Activated T-helper 2 cell treated with anti-CD3 and anti-CD28 coated beads, Interferon-gamma antibody, Interleukin-2, Interleukin-4, amounts not matched to agents 10 μg/mL and 5 μg/mL and 100 μg/mL, durations not matched to agents 14 hours and 24 hours and 36 hours (primary cell): ENCODE measurements at regions of chr10 and their contacts with region 1.

Region 1: DNA sequence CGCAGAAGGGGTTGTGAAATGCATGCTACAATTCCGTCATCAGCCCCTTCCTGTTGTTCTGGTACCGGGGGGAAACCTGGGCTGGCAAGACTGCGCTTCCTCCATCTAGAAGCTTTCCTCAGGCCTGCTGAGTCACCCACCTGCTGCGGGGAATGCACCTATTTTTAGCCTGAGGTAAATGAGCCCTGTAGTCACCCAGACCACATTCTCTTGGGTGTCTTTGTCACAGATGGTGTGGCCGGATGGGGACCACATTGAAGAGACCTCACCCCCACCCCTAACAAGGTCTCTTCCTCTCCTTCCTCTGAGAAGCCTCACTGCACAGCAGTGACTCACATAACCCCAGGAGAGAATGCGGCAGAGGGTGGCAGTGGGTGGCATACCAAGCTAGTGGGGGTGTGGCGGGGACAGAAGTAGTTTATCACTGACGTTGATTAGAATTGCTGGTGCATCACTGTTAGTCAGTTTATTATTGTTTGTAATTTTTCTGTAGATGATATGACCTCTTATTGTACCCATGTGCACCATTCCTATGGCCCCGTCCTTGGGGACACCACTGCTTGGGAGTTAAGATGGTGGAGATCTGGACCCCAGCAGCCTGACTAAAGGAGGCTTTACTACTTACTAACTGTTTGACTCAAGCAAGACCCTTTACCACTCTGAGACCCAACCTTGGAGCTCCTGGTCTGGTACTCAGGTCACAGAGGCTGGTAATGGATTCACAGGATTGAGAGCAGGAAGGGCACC is 83.0 kb upstream of the DUSP5 start:
- DNase-seq: peak; percentile 84
- H3K4me3 Mint-ChIP-seq: peak overlapping the region; percentile 61
- H3K27ac Mint-ChIP-seq: peak overlapping the region; percentile 90
- H3K4me1 Mint-ChIP-seq: peaks cover 70% of the 10 kb centered on the region
- H3K27me3 Mint-ChIP-seq: no peaks in the 10 kb centered on the region

Region 2: GRCh38 chr10:110311357-110311949 is 103.3 kb before region 1 on chr10:
- intact Hi-C with region 1: loop called (anchors 1 kb)
- DNase-seq: no peak
- H3K4me3 Mint-ChIP-seq: no peak overlapping the region
- H3K27ac Mint-ChIP-seq: no peak overlapping the region
- H3K4me1 Mint-ChIP-seq: peaks cover 33% of the 10 kb centered on the region
- H3K27me3 Mint-ChIP-seq: no peaks in the 10 kb centered on the region

Region 3: GRCh38 chr10:110395725-110396651 is 18.7 kb before region 1 on chr10:
- intact Hi-C with region 1: loop called (anchors 1 kb)
- DNase-seq: no peak
- H3K4me3 Mint-ChIP-seq: no peak overlapping the region
- H3K27ac Mint-ChIP-seq: peak overlapping the region; percentile 78
- H3K4me1 Mint-ChIP-seq: peaks cover 56% of the 10 kb centered on the region
- H3K27me3 Mint-ChIP-seq: no peaks in the 10 kb centered on the region

Region 4: DNA sequence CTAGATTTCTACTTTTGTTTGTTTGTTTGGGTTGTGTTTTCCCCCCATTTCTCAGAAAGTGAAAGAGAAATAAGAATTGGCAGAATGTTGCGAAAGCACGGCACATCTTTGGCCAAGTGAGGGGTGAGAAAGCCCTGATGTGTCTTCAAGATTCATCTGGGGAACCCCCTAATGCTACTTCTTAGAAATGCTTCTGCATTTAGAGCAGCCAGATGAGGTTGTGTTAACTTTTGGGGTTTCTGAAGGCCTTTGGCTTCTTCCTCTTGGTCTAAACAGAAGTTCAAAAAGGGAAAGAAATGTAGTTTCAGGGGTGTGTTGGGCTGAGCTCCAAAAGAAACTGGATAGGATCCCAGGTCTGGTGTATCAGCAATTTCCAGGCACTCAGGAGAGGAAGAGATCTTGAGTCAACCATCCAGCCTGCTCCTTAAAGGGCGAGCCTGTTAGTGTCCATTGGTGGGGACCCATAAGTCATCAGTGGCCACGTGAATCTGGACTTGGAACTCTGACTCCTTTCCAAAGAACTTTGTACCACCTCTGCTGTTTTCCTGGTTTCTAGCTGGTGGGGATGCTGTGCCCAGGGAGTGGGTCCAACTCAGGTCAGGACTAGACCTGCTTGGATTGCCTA is 89.5 kb after region 1 on chr10:
- intact Hi-C with region 1: loop called (anchors 1 kb)
- DNase-seq: peak; percentile 70
- H3K4me3 Mint-ChIP-seq: peak overlapping the region; percentile 96
- H3K27ac Mint-ChIP-seq: peak overlapping the region; percentile 81
- H3K4me1 Mint-ChIP-seq: peaks cover 86% of the 10 kb centered on the region
- H3K27me3 Mint-ChIP-seq: no peaks in the 10 kb centered on the region

Region 5: GRCh38 chr10:110864662-110865140 is 450.0 kb after region 1 on chr10:
- intact Hi-C with region 1: loop called (anchors 10 kb)
- DNase-seq: peak; percentile 65
- H3K4me3 Mint-ChIP-seq: peak overlapping the region; percentile 72
- H3K27ac Mint-ChIP-seq: peak overlapping the region; percentile 93
- H3K4me1 Mint-ChIP-seq: peaks cover 73% of the 10 kb centered on the region
- H3K27me3 Mint-ChIP-seq: no peaks in the 10 kb centered on the region